ENCODE measurements at regions of chr2 and their contacts with region 1.

Region 1: GRCh38 chr2:58629545-58630119 is 388.5 kb upstream of the FANCL start:
- DNase-seq: no peak
- H3K4me3 ChIP-seq: no peak overlapping the region
- CTCF ChIP-seq: no peak
- POLR2A ChIP-seq: no peak

Region 2: DNA sequence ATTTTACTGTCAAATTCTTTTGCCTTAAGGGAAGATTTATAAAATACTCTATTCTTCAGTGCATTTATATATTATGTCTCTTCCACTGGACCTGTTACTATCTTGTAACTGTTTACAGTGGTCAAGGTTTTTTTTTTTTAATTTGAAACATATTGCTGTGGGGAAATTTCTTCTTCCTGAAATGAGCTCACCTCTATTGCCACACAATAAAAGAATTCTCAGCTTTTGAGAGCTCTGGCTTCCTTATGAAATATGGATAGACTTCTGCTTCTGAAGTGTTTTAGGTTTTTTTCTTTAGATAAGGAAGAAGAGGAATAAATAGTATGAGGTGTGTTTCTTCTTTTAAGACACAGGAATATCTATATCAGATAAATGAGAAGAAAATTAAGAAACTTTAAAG is 575.4 kb before region 1 on chr2:
- intact Hi-C with region 1: loop called (anchors 5 kb)
- DNase-seq: no peak
- H3K4me3 ChIP-seq: no peak overlapping the region
- CTCF ChIP-seq: no peak
- POLR2A ChIP-seq: no peak